K562 (cell line): ENCODE measurements at regions of chr10 and their contacts with region 1.

Region 1: DNA sequence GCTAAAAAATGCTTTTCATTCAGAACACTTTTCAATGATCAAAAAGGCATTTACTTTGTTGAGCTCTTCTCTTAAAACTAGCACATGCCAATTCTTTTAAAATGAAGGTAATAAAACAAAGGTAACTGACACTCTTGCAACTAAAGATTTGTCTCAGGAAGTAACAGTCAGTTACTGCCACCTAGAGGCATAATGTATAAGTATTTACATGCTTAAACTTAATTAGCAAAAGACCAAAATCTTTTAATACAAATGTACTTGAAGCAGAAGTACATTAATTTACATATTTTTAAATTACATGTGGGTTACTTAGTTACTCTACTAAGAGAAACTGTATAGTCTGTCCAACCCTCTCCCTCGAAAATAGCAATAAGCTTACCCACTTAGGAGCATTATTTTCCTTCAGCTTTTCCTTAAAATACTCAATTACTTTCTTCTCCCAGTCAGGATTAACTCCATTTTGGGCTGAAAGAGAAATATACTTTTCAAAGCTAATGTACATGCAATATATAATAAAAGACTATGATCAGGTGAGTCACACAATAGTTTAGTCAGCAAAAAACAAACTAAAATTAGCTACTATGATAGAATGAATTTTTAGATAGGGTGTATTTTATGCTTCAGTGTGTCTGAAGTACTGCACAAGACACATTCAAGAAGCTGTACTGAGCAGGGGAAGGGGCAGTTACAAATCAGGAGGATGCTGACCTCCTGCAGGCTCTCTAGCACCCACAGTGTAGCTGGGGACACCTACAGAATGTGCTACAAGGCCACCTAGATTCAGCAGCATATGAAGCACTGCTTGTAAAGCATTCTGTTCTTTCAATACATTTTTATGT is 13.0 kb downstream of the MCMBP start:
- DNase-seq: peak in 1 of 4 experiments; percentile 37
- ATAC-seq: peak; percentile 70
- H3K4me3 ChIP-seq: no peak overlapping the region
- H3K27ac ChIP-seq: no peak overlapping the region
- H3K4me1 ChIP-seq: no peaks in the 10 kb centered on the region
- H3K27me3 ChIP-seq: no peaks in the 10 kb centered on the region
- CTCF ChIP-seq: peak in 1 of 3 experiments; percentile 64; a peak in 4 of 6 replicates
- EP300 ChIP-seq: no peak
- POLR2A ChIP-seq: no peak
- RAD21 ChIP-seq: peak; percentile 75 to 80

Region 2: GRCh38 chr10:119542988-119543813 is 316.4 kb before region 1 on chr10:
- CTCF ChIA-PET with region 1: no interaction called
- POLR2A ChIA-PET with region 1: no interaction called
- in situ Hi-C with region 1: no loop called
- intact Hi-C with region 1: no loop called
- DNase-seq: peak; percentile 65 to 77 (median 74)
- ATAC-seq: peak; percentile 66
- H3K4me3 ChIP-seq: peak overlapping the region; percentile 70
- H3K27ac ChIP-seq: peak overlapping the region; percentile 75
- H3K4me1 ChIP-seq: peaks cover 17 to 52% of the 10 kb centered on the region in 2 experiments
- H3K27me3 ChIP-seq: no peaks in the 10 kb centered on the region
- CTCF ChIP-seq: peak; percentile 56 to 67 (median 66)
- EP300 ChIP-seq: no peak
- POLR2A ChIP-seq: peak; percentile 21
- RAD21 ChIP-seq: peak; percentile 21 to 58; a peak in 3 of 4 replicates

Region 3: GRCh38 chr10:119608316-119609155 is 251.1 kb before region 1 on chr10:
- CTCF ChIA-PET with region 1: interaction called, 4 read pairs
- POLR2A ChIA-PET with region 1: no interaction called
- in situ Hi-C with region 1: loop called (anchors 10 kb)
- intact Hi-C with region 1: no loop called
- DNase-seq: peak in 2 of 4 experiments; percentile 21 to 47
- ATAC-seq: peak; percentile 95
- H3K4me3 ChIP-seq: no peak overlapping the region
- H3K27ac ChIP-seq: no peak overlapping the region
- H3K4me1 ChIP-seq: peaks cover 0 to 2% of the 10 kb centered on the region in 2 experiments; a peak in 2 of 5 replicates
- H3K27me3 ChIP-seq: no peaks in the 10 kb centered on the region
- CTCF ChIP-seq: peak; percentile 65 to 68 (median 68)
- EP300 ChIP-seq: no peak
- POLR2A ChIP-seq: no peak
- RAD21 ChIP-seq: peak; percentile 50 to 69

Region 4: GRCh38 chr10:119616882-119617570 is 242.6 kb before region 1 on chr10:
- CTCF ChIA-PET with region 1: no interaction called
- POLR2A ChIA-PET with region 1: no interaction called
- in situ Hi-C with region 1: no loop called
- intact Hi-C with region 1: loop called (anchors 5 kb)
- DNase-seq: peak; percentile 49 to 75 (median 51)
- ATAC-seq: peak; percentile 94
- H3K4me3 ChIP-seq: peak overlapping the region; percentile 28
- H3K27ac ChIP-seq: peak overlapping the region; percentile 60
- H3K4me1 ChIP-seq: peaks cover 0 to 8% of the 10 kb centered on the region in 2 experiments; a peak in 3 of 5 replicates
- H3K27me3 ChIP-seq: no peaks in the 10 kb centered on the region
- CTCF ChIP-seq: peak; percentile 74 to 82 (median 75)
- EP300 ChIP-seq: no peak
- POLR2A ChIP-seq: 0 out of 2 replicates have a peak, but pooled peaks have one; percentile 38
- RAD21 ChIP-seq: peak; percentile 55 to 63

Region 5: DNA sequence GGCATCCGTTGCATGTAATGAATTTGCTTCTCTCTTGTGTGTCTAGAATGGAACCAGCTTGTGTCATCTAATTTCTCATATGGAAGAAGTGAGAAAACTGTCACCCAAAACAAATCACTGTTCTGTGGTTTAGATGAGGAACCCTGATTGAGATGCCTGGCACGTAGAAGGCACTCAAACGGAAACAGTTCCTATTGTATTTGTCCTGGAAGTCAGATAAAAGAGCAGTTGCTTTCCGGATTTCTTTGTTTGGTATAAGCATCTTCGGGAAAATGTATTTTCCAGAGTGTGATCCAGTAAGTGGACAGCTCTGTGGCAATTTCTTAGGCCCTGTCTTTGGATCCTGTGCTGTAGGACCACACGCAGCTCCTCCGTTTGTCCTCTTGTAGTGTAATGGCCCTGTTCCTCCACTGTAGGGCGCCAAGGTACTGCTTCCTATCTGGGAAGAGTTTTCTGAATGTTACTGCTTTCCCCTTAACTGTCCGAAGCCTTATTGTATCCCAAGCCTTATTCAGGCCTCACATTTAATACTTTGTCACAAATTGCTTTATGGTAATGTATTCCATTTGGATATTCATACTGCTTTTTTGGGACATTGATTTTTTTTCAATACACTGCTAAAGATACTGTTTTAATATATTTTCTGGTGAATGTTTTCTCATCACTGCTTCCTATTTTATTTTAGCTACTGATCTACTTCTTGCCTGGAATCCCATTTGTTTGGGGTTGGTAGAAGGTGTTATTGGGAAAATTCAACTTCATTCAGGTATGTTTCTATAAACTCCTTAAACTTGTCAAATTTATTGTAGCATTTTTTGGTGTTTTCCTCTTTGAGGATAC is 109.0 kb before region 1 on chr10:
- CTCF ChIA-PET with region 1: interaction called, 12 read pairs
- POLR2A ChIA-PET with region 1: interaction called, 3 read pairs
- in situ Hi-C with region 1: loop called (anchors 5 kb)
- intact Hi-C with region 1: loop called (anchors 2 kb)
- DNase-seq: peak; percentile 37 to 72 (median 52)
- ATAC-seq: peak; percentile 98
- H3K4me3 ChIP-seq: no peak overlapping the region
- H3K27ac ChIP-seq: no peak overlapping the region
- H3K4me1 ChIP-seq: peaks cover 0 to 6% of the 10 kb centered on the region in 2 experiments; a peak in 3 of 5 replicates
- H3K27me3 ChIP-seq: no peaks in the 10 kb centered on the region
- CTCF ChIP-seq: peak; percentile 70 to 84 (median 84)
- EP300 ChIP-seq: no peak
- POLR2A ChIP-seq: no peak
- RAD21 ChIP-seq: peak; percentile 89 to 93

Region 6: DNA sequence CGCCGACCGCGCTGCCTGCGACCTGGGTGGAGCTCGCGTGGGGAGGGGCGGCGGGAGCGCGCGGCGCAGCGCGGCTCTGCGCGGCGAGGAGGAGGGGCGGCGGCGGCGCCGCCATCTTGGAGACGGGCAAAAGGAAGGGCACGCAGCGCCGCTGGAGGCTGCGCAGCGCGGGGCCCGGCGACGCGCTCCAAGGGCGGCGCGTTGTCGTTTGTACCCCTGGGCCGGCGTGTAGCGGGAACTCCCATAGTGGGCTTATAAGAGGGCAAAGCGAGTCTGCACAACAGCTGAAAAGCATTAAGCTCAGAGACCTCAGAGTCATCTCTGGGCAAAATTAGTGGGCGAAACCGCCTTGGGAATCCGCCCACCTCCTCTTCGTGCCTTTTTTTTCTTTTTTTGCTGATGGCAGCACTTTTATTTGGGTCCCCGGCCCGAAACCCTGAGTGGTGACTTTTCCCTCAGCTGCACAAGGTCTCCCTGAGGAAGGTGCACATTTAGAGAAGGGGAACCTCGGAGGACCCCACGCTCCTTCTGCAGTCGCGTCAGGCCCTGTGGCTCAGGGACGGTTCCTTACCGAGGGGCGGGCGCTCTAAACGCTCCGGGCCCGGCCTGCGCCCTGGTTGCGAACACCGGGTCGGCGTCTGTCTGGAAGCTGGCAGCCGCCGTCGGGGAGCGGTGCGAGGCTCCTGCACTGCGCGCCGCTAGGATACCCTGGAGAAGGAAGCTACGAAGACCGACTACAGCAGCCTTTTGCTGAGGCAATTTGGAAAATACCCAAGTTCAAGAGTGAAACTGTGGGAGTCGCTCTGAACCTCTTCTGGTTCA is 13.4 kb after region 1 on chr10:
- CTCF ChIA-PET with region 1: no interaction called
- POLR2A ChIA-PET with region 1: interaction called, 11 read pairs
- in situ Hi-C with region 1: no loop called
- intact Hi-C with region 1: no loop called
- DNase-seq: peak; percentile 17 to 91 (median 50)
- ATAC-seq: peak; percentile 95
- H3K4me3 ChIP-seq: peak overlapping the region; percentile 77
- H3K27ac ChIP-seq: peak overlapping the region; percentile 64
- H3K4me1 ChIP-seq: peaks cover 10% of the 10 kb centered on the region in 2 experiments; a peak in 4 of 5 replicates
- H3K27me3 ChIP-seq: no peaks in the 10 kb centered on the region
- CTCF ChIP-seq: 0 out of 6 replicates have a peak, but pooled peaks of 1 of the 3 experiments have one; percentile 2
- EP300 ChIP-seq: no peak
- POLR2A ChIP-seq: peak; percentile 70
- RAD21 ChIP-seq: no peak